Ovary (tissue), 10 donors: ENCODE measurements at regions of chr21 and their contacts with region 1.

Region 1: DNA sequence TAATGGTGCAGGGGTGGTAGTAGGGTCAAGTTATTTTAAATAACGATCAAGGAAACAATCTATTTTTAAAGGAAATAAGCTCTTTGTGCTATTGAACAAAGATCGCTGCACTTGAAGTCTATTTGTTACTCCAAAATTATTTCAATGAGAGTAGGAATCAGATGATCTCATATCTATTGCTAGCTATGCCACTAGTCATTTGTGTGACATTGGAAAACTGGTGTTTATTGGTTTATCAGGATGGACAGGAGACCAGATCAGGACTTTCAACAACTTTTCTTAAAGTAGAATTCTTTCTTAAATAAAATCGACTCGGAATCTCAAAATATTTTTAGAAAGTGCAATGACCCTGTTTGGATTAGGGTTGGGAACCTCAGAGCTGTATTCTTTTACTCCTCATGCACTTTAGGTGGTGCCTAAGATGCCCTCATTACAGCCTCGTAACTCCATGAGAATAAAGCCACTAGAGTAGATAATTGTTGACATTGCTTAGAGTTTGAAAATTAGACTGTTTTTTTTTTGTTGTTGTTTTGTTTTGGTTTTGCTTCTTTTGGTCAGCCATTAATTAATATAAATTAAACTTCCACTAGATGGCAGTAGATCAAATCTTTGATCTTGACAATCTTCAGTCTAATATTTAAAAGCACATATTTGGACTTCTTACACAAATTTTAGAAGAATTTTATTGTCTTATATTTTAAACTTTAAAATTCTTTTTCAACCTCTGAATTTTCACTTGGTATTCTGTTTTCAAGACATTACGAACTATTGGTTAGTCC is 352.4 kb downstream of the USP25 start:
- DNase-seq: no peak
- H3K4me3 ChIP-seq: no peak overlapping the region
- H3K27ac ChIP-seq: no peak overlapping the region
- H3K4me1 ChIP-seq: no peaks in the 10 kb centered on the region
- H3K27me3 ChIP-seq: no peaks in the 10 kb centered on the region
- CTCF ChIP-seq: peak; percentile 20 to 41 (median 36)
- EP300 ChIP-seq: no peak
- POLR2A ChIP-seq: no peak

Region 2: GRCh38 chr21:15659753-15660422 is 422.3 kb before region 1 on chr21:
- intact Hi-C with region 1: no loop called
- DNase-seq: no peak
- H3K4me3 ChIP-seq: no peak overlapping the region
- H3K27ac ChIP-seq: no peak overlapping the region
- H3K4me1 ChIP-seq: no peaks in the 10 kb centered on the region
- H3K27me3 ChIP-seq: no peaks in the 10 kb centered on the region
- CTCF ChIP-seq: no peak
- EP300 ChIP-seq: no peak
- POLR2A ChIP-seq: no peak

Region 3: GRCh38 chr21:15788847-15789493 is 293.3 kb before region 1 on chr21:
- intact Hi-C with region 1: no loop called
- DNase-seq: no peak
- H3K4me3 ChIP-seq: no peak overlapping the region
- H3K27ac ChIP-seq: no peak overlapping the region
- H3K4me1 ChIP-seq: no peaks in the 10 kb centered on the region
- H3K27me3 ChIP-seq: no peaks in the 10 kb centered on the region
- CTCF ChIP-seq: no peak
- EP300 ChIP-seq: no peak
- POLR2A ChIP-seq: no peak

Region 4: DNA sequence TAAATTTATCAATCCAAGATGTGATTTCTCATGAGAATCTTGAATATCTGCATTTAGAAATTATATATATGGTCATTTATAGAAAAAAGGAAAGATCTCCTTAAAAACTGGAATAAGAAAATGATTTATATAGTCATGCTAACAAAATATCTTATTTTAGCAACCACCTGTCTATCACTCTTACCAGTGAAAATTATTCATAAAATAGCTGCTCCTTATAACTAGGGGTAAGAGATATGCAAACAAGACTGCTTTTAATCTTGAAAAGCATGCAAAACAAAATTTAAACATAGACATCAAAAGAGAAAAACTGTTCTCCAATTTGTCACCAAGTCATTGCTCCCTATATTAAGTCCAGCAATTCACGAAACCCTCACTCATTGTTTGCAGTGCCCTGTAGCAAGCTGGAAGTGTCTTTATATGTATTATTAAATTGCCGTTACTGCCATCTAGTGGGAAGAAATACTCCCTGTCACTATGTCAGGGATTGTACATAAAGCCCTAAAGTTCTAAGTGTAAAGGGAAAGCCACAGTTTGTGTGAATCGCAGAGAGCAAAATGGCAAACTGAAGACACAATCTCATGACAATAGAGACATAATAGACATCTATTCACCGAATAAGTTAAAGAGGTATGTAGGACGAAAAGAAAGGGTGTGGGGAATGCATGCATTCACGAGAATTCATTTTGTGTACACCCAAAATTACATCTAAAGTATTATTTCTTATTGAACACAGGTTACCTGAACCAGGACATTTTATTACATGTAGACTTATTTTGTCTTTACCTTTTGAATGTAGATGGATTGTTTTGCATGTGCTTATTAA is 248.1 kb after region 1 on chr21:
- intact Hi-C with region 1: loop called in 3 of 4 experiments (anchors 10 kb)
- DNase-seq: no peak
- H3K4me3 ChIP-seq: peak overlapping the region; percentile 17
- H3K27ac ChIP-seq: peak overlapping the region in 1 of 2 donors; percentile 36
- H3K4me1 ChIP-seq: no peaks in the 10 kb centered on the region
- H3K27me3 ChIP-seq: no peaks in the 10 kb centered on the region
- CTCF ChIP-seq: peak; percentile 17 to 70 (median 67)
- EP300 ChIP-seq: no peak
- POLR2A ChIP-seq: no peak

Region 5: GRCh38 chr21:17269760-17270159 is 1187.5 kb after region 1 on chr21:
- intact Hi-C with region 1: loop called in 1 of 4 experiments (anchors 10 kb)
- DNase-seq: no peak
- H3K4me3 ChIP-seq: no peak overlapping the region
- H3K27ac ChIP-seq: peak overlapping the region in 1 of 2 donors; percentile 47
- H3K4me1 ChIP-seq: no peaks in the 10 kb centered on the region
- H3K27me3 ChIP-seq: no peaks in the 10 kb centered on the region
- CTCF ChIP-seq: no peak
- EP300 ChIP-seq: no peak
- POLR2A ChIP-seq: no peak